ENCODE measurements at regions of chr9 and their contacts with region 1.

Region 1: DNA sequence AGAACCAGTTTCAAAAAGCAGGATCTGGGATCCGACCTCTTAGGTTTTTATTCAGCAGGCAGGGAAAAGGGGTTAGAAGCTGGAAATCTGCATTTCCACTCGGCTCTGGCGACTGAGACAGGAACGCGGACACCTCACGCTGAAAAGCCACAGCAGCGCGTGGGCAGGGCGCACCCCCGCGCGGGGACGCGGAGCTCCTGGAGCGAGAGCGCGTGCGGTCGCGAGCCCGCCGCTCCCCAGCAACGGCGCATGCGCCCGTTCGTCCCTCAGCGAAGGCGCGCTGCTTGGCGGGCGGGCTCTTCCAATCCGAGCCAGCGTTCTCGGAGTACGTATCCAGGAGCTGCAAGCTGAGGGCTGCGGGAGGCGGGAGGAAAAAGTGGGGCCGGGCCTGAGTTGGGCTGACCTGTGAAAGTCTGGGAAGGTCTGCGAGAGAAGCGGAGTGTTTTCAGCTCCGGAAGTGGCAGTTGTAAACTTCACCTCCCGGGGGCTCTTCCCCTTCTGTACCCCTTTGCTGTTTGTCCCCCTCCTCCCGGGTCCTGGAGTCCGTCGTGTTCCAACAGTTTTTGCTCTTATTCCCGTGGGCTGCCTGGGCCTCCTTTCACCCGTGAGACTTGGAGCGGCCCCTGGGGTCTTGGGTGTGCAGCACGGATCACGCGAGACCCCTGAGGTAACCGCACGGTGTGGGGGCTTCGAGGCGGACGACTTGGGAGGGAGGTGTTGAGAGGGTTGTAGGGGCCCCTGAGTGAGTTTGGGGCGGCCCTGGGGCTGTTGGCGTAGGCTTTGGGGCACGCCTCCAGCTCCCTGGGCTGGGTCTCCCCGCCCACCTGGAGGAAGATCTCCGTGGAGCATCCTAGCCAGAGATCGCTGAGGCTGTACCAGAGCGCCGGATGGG is at the start of gene CCDC171:
- DNase-seq: peak; percentile 93
- ATAC-seq: peak; percentile 91
- H3K4me3 Mint-ChIP-seq: peak within 1 kb of the TSS; percentile 79
- H3K27ac Mint-ChIP-seq: peak within 1 kb of the TSS; percentile 80
- H3K4me1 Mint-ChIP-seq: peaks cover 9% of the 10 kb centered on the region
- H3K27me3 Mint-ChIP-seq: no peaks in the 10 kb centered on the region
- total RNA-seq, gene CCDC171: 2.8 to 2.9 TPM

Region 2: GRCh38 chr9:14400658-14400995 is 1152.3 kb before region 1 on chr9:
- CTCF ChIA-PET with region 1: no interaction called
- POLR2A ChIA-PET with region 1: no interaction called
- intact Hi-C with region 1: no loop called
- DNase-seq: no peak
- ATAC-seq: no peak
- H3K4me3 Mint-ChIP-seq: no peak overlapping the region
- H3K27ac Mint-ChIP-seq: no peak overlapping the region
- H3K4me1 Mint-ChIP-seq: no peaks in the 10 kb centered on the region
- H3K27me3 Mint-ChIP-seq: peaks cover 4% of the 10 kb centered on the region

Region 3: GRCh38 chr9:14693206-14693861 is 859.5 kb before region 1 on chr9 and contains the start of gene ZDHHC21:
- CTCF ChIA-PET with region 1: no interaction called
- POLR2A ChIA-PET with region 1: no interaction called
- intact Hi-C with region 1: loop called in 1 of 2 experiments (anchors 10 kb)
- DNase-seq: peak; percentile 79
- ATAC-seq: peak; percentile 88
- H3K4me3 Mint-ChIP-seq: peak within 1 kb of the TSS; percentile 91
- H3K27ac Mint-ChIP-seq: peak within 1 kb of the TSS; percentile 94
- H3K4me1 Mint-ChIP-seq: peaks cover 27% of the 10 kb centered on the region
- H3K27me3 Mint-ChIP-seq: peaks cover 4% of the 10 kb centered on the region
- total RNA-seq, gene ZDHHC21: 5.1 TPM

Region 4: DNA sequence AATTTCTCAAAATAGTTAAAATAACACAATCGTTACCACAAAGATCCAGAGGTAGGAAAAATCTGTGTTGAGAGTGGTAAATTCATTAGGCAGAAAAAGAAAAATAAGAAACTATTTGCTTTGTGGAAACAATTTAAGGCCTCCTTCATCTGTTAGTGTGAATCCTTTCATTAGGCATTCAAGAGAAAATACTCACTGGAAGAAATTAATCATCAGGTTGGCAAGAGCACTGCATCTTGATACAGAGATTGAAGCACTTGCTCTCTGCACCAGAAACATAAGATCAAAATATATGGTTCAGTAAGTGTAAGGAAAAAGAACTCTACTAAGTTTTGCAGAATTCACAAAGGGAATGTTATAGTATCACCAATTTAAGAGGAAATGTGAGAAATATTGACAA is 290.3 kb before region 1 on chr9:
- CTCF ChIA-PET with region 1: no interaction called
- POLR2A ChIA-PET with region 1: no interaction called
- intact Hi-C with region 1: no loop called
- DNase-seq: no peak
- ATAC-seq: no peak
- H3K4me3 Mint-ChIP-seq: no peak overlapping the region
- H3K27ac Mint-ChIP-seq: no peak overlapping the region
- H3K4me1 Mint-ChIP-seq: peaks cover 17% of the 10 kb centered on the region
- H3K27me3 Mint-ChIP-seq: no peaks in the 10 kb centered on the region

Region 5: DNA sequence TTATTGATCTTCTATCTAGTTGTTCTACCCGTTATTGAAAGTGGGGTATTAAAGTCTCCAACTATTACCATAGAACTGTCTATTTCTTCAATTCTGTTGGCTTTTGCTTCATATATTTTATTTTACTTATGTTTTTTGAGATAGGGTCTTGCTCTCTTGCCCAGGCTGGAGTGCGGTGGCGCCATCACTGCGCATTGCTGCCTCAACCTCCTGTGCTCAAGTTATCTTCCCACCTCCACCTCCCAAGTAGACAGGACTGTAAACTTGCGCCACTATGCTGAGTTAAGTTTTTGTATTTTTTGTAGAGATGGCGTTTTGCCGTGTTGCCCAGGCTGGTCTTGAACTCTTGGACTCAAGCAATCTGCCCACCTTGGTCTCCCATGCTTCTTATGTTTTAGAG is 114.0 kb before region 1 on chr9:
- CTCF ChIA-PET with region 1: no interaction called
- POLR2A ChIA-PET with region 1: no interaction called
- intact Hi-C with region 1: no loop called
- DNase-seq: no peak
- ATAC-seq: no peak
- H3K4me3 Mint-ChIP-seq: no peak overlapping the region
- H3K27ac Mint-ChIP-seq: no peak overlapping the region
- H3K4me1 Mint-ChIP-seq: peaks cover 20% of the 10 kb centered on the region
- H3K27me3 Mint-ChIP-seq: no peaks in the 10 kb centered on the region

Region 6: GRCh38 chr9:15510789-15511575 is 41.9 kb before region 1 on chr9 and contains the start of gene PSIP1:
- CTCF ChIA-PET with region 1: interaction called, 5 read pairs
- POLR2A ChIA-PET with region 1: interaction called, 15 read pairs
- intact Hi-C with region 1: loop called (anchors 1 kb)
- DNase-seq: peak; percentile 92
- ATAC-seq: peak; percentile 86
- H3K4me3 Mint-ChIP-seq: peak within 1 kb of the TSS; percentile 85
- H3K27ac Mint-ChIP-seq: peak within 1 kb of the TSS; percentile 98
- H3K4me1 Mint-ChIP-seq: peaks cover 48% of the 10 kb centered on the region
- H3K27me3 Mint-ChIP-seq: no peaks in the 10 kb centered on the region
- total RNA-seq, gene PSIP1: 139 to 189 TPM